ENCODE measurements at regions of chr13 and their contacts with region 1.

Region 1: GRCh38 chr13:63081400-63082014 is 1665.9 kb upstream of the PCDH20 start:
- DNase-seq: no peak

Region 2: DNA sequence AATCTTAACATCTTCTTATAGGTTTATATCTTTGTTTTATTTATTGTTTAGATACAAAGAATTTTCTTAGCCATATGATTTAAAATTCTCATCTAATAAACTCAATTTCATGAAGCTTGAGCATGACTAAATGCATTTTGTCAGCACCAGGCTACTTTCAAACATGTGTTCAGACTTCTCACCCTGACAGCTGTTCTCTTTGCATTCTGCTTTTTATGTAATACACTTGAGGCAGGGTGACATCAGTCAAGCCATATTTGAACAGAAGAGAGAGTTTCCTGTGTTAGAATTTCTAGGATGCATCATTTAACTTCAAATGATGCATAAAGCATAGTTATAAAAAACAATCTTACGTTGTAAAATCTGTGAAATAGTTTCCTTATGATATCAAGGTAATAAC is 370.7 kb before region 1 on chr13:
- intact Hi-C with region 1: loop called in 1 of 2 experiments (anchors 5 kb)
- DNase-seq: no peak

Region 3: GRCh38 chr13:63048653-63049052 is 32.9 kb before region 1 on chr13:
- intact Hi-C with region 1: no loop called
- DNase-seq: no peak

Measured in posterior vena cava (tissue), 2 donors.